Natural killer cell (primary cell): ENCODE measurements at regions of chr1 and their contacts with region 1.

Region 1: DNA sequence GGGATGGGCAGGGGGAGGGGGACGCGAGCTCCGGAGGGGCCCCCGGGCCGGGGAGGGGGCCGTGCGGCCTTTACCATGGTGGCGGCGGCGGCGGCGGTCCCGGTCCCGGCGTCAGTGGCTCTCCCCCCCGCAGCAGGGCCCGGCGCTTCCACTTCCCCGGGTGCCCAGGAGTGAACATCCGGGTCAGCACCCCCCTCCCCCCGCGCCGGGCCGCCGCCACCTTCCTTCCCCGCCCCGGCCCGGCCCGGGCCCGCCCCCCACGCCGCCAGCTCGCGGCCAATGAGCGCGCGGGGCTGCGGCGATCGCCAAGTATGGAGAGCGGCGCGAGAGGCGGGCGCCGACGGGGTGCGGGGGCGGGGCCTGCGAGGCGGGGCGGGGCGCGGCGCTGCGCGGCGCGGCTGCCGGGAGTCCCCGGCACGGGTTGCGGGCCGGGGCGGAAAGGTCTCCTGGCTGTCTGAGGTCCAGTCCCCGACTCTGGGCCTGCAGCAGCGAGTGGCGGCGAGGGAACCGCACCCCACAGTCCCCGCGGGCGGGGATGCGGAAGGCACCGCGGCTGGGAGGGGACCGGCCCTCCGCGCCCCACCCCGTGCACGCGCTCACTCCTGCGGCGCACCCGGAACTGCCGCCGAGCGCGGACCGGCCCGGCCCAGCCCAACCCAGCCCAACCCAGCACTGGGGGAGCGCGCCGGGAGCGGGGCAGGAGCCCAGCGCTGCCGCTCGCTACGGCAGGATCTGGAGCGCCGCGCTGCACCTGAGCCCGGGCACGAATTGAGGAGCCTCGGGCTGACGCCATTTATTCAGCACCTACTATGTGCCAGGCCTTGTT is at the start of gene CAPZB:
- DNase-seq: peak; percentile 90 to 95
- ATAC-seq: peak; percentile 89 to 98 (median 92)
- H3K4me3 ChIP-seq: peak within 1 kb of the TSS; percentile 94
- H3K4me3 Mint-ChIP-seq: peak within 1 kb of the TSS; percentile 91
- H3K27ac ChIP-seq: peak within 1 kb of the TSS; percentile 92
- H3K27ac Mint-ChIP-seq: peak within 1 kb of the TSS; percentile 89 to 96
- H3K4me1 ChIP-seq: peaks cover 59% of the 10 kb centered on the region
- H3K4me1 Mint-ChIP-seq: peaks cover 65 to 71% of the 10 kb centered on the region in 2 donors
- H3K27me3 ChIP-seq: no peaks in the 10 kb centered on the region
- H3K27me3 Mint-ChIP-seq: no peaks in the 10 kb centered on the region
- CTCF ChIP-seq: no peak
- total RNA-seq, gene CAPZB: 369 to 393 (median 375) TPM

Region 2: GRCh38 chr1:19311959-19312781 is 173.4 kb before region 1 on chr1 and contains the starts of genes AKR7A2 and SLC66A1:
- intact Hi-C with region 1: loop called (anchors 10 kb)
- DNase-seq: peak; percentile 91 to 95
- ATAC-seq: peak; percentile 96 to 99 (median 98)
- H3K4me3 ChIP-seq: peak within 1 kb of the TSS; percentile 75
- H3K4me3 Mint-ChIP-seq: peak within 1 kb of the TSS; percentile 87
- H3K27ac ChIP-seq: peak within 1 kb of the TSS; percentile 45
- H3K27ac Mint-ChIP-seq: peak within 1 kb of the TSS; percentile 73 to 78
- H3K4me1 ChIP-seq: peaks cover 52% of the 10 kb centered on the region
- H3K4me1 Mint-ChIP-seq: peaks cover 31 to 43% of the 10 kb centered on the region in 2 donors
- H3K27me3 ChIP-seq: no peaks in the 10 kb centered on the region
- H3K27me3 Mint-ChIP-seq: no peaks in the 10 kb centered on the region
- CTCF ChIP-seq: no peak
- total RNA-seq, gene AKR7A2: 25.5 to 31.9 (median 28.9) TPM
- total RNA-seq, gene SLC66A1: 5.8 to 8.5 (median 7.6) TPM

Region 3: DNA sequence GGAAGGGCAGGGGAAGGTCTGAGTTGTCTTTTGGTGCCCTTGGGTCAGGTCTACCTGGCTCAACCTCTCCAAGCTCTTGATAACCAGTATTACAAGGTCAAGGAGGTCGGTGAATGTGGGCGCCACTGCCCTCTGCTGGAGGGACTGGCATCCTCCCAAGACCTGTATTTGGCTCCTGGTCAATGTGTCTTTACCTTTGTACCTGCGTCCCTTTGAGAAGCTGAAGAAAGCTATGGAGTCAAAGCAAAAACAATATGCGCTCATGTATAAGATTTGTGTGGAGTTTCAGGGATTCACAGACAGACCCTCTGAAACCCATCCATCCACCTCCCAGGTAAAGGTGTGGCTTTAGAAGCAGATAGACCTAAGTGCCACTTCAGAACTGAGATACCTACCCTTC is 96.7 kb after region 1 on chr1:
- intact Hi-C with region 1: loop called (anchors 1 kb)
- DNase-seq: peak; percentile 70 to 86
- ATAC-seq: peak; percentile 77 to 97 (median 95)
- H3K4me3 ChIP-seq: no peak overlapping the region
- H3K4me3 Mint-ChIP-seq: no peak overlapping the region
- H3K27ac ChIP-seq: no peak overlapping the region
- H3K27ac Mint-ChIP-seq: no peak overlapping the region
- H3K4me1 ChIP-seq: no peaks in the 10 kb centered on the region
- H3K4me1 Mint-ChIP-seq: no peaks in the 10 kb centered on the region
- H3K27me3 ChIP-seq: no peaks in the 10 kb centered on the region
- H3K27me3 Mint-ChIP-seq: no peaks in the 10 kb centered on the region
- CTCF ChIP-seq: peak; percentile 84

Region 4: DNA sequence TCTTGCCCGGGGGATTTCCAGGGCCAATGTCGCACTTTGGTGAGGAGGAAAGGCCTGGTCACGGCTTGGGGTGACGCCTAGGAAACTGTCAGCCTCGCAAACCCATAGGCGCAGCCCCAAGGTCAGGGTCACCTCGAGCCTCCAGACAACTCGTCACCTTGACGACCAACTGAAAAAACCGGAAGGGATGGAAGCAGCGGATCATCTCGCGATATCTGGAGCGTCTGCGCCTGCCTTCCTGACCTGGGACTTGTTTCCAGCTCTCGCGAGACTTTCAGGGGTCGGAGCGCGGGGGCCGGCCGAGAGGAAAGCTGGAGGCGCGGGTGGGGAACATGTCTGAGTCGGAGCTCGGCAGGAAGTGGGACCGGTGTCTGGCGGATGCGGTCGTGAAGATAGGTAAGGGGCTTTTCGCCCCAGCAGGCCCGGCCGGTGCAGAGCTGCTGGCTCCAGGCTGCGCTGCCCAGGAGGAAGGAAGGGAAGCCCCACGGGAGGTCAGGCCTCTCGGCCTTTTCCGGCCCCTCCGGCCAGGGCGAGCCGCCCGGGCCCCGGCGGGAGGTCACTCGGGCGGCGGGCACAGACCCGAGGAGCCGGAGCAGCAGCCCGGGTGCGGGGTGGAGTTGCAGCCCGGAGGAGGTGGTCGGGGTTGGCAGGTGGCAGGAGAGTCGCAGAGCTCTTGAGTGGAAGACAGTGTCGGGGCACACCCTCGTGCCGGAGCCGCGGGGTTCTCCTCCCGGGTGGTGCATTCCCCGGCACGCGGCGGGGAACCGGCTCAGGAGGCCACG is 111.3 kb after region 1 on chr1:
- intact Hi-C with region 1: loop called (anchors 2 kb)
- DNase-seq: peak; percentile 94 to 100
- ATAC-seq: peak; percentile 77 to 89 (median 80)
- H3K4me3 ChIP-seq: peak overlapping the region; percentile 78
- H3K4me3 Mint-ChIP-seq: peak overlapping the region; percentile 100
- H3K27ac ChIP-seq: peak overlapping the region; percentile 99
- H3K27ac Mint-ChIP-seq: peak overlapping the region; percentile 98 to 100
- H3K4me1 ChIP-seq: peaks cover 29% of the 10 kb centered on the region
- H3K4me1 Mint-ChIP-seq: peaks cover 39 to 45% of the 10 kb centered on the region in 2 donors
- H3K27me3 ChIP-seq: no peaks in the 10 kb centered on the region
- H3K27me3 Mint-ChIP-seq: no peaks in the 10 kb centered on the region
- CTCF ChIP-seq: no peak

Region 5: DNA sequence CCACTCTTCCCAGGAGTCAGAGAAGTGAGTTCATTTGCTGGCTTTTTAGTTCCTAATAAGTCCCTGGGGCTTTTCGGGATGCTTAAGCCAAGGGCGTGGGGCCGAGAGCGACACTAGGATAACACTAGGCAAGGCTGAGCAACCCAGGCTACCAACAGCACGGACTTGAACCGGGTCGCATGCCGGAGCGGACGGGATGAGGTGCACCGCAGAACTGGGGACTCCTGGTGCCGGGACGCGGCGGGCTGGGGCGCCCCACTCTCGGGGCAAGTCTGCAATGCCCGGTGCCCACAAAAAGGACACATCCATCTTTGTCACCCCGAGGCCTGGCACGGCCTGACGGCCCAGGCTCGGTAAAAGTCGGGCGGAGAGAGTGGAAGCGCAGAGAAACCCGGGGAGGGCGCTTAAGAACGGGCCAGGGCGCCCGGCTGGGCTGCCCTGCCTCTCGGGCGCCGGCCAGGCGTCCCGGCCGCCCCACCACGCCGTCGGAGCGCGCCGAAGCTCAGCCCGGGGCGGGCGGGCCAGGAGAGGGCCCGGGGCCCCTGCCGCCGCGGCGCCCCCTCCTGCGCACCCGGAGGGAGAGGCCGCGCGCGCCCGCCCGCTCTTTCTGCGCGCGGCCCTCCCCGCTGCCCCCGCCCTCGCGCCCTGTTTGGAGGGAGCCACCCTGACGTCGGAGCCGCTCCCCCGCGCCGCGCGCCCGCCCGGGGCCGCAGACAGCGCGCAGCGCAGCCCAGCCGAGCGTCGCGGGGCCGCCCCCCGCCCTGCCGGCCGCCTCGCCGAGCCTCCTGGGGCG is 158.2 kb after region 1 on chr1 and contains the start of gene NBL1:
- intact Hi-C with region 1: loop called (anchors 2 kb)
- DNase-seq: peak; percentile 64 to 87
- ATAC-seq: peak; percentile 86 to 91 (median 88)
- H3K4me3 ChIP-seq: peak within 1 kb of the TSS; percentile 34
- H3K4me3 Mint-ChIP-seq: peak within 1 kb of the TSS; percentile 89
- H3K27ac ChIP-seq: no peak within 1 kb of the TSS
- H3K27ac Mint-ChIP-seq: peak within 1 kb of the TSS; percentile 54 to 88
- H3K4me1 ChIP-seq: peaks cover 18% of the 10 kb centered on the region
- H3K4me1 Mint-ChIP-seq: peaks cover 19 to 23% of the 10 kb centered on the region in 2 donors
- H3K27me3 ChIP-seq: peaks cover 20% of the 10 kb centered on the region
- H3K27me3 Mint-ChIP-seq: peaks cover 11 to 25% of the 10 kb centered on the region in 2 donors
- CTCF ChIP-seq: no peak
- total RNA-seq, gene NBL1: 10.7 to 18.4 (median 11.4) TPM